Activated CD4-positive, alpha-beta T cell treated with anti-CD3 and anti-CD28 coated beads, Interleukin-2, amount 10 ng/mL, durations not matched to agents 24 days and 14 days (primary cell): ENCODE measurements at regions of chr15 and their contacts with region 1.

Region 1: DNA sequence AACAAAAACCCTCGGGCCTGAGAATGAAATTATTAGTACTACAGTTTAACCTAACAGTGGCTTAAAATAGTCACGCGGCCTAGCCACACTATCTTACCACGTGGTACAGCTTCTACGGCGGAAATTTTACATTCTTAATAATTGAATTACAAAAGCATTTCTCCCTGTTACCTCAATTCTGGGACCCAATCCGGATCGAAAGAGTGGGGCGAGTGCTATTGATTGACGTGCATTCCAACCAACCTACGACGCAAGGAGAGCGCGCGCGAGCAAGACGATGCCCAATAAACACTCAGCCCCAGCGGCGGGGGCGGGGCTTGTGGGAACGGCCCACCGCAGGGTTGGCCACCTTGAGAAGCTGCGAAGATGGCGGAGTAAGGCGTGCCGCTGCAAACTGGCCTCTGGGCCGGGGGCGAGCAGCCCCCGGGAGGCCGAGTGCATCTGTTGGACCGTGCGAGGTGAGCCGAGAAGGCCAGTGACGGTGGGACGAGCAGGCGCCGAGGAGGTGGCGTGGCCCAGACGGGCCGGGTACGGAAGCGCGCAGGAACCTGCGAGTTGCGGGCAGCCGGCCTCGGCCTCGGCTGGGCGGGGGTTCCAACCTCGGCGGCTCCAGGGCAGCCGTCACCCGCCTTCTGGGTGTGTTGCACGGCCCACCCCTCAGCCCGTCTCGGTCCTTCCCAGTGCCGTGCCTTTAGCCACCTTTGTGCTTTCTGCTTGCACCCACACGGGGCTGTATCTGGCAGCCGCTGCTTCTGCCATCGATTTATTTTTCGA is 48.6 kb downstream of the OIP5 start:
- DNase-seq: peak; percentile 99
- H3K4me3 Mint-ChIP-seq: peak overlapping the region; percentile 99
- H3K27ac Mint-ChIP-seq: peak overlapping the region; percentile 98
- H3K4me1 Mint-ChIP-seq: peaks cover 45% of the 10 kb centered on the region
- H3K27me3 Mint-ChIP-seq: no peaks in the 10 kb centered on the region

Region 2: GRCh38 chr15:41215708-41216107 is 68.1 kb before region 1 on chr15:
- intact Hi-C with region 1: no loop called
- DNase-seq: no peak
- H3K4me3 Mint-ChIP-seq: no peak overlapping the region
- H3K27ac Mint-ChIP-seq: no peak overlapping the region
- H3K4me1 Mint-ChIP-seq: no peaks in the 10 kb centered on the region
- H3K27me3 Mint-ChIP-seq: peaks cover 34% of the 10 kb centered on the region

Region 3: DNA sequence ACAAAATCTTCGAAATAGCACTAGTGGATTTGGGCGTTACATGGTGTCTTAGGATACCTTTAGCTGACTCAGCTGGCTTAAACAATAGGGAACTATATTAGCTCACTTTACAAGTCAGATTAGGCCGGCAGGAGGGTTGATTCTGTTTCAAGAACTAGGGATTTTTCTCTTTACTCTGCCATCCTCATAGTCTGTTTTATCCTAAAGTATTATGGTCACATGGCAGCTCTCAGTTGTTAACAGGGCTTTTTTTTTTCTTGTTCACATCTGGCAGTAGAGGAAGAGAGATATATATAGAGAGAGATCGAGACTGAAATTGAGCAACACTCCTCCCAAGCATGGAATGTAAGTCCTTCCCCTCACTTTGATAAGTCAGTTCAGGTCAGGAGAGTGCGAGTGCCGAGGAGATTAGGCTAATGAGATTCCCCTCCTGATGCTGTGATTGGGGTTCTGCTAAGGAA is 19.9 kb before region 1 on chr15:
- intact Hi-C with region 1: no loop called
- DNase-seq: no peak
- H3K4me3 Mint-ChIP-seq: no peak overlapping the region
- H3K27ac Mint-ChIP-seq: no peak overlapping the region
- H3K4me1 Mint-ChIP-seq: peaks cover 3% of the 10 kb centered on the region
- H3K27me3 Mint-ChIP-seq: no peaks in the 10 kb centered on the region

Region 4: GRCh38 chr15:41331833-41332787 is 48.3 kb after region 1 on chr15 and contains the start of gene OIP5:
- intact Hi-C with region 1: loop called (anchors 1 kb)
- DNase-seq: peak; percentile 100
- H3K4me3 Mint-ChIP-seq: peak within 1 kb of the TSS; percentile 95
- H3K27ac Mint-ChIP-seq: peak within 1 kb of the TSS; percentile 98
- H3K4me1 Mint-ChIP-seq: peaks cover 29% of the 10 kb centered on the region
- H3K27me3 Mint-ChIP-seq: no peaks in the 10 kb centered on the region
- total RNA-seq, gene OIP5: 15.8 and 21.0 TPM in 2 replicates